HEK293 (cell line): ENCODE measurements at regions of chr6 and their contacts with region 1.

Region 1: DNA sequence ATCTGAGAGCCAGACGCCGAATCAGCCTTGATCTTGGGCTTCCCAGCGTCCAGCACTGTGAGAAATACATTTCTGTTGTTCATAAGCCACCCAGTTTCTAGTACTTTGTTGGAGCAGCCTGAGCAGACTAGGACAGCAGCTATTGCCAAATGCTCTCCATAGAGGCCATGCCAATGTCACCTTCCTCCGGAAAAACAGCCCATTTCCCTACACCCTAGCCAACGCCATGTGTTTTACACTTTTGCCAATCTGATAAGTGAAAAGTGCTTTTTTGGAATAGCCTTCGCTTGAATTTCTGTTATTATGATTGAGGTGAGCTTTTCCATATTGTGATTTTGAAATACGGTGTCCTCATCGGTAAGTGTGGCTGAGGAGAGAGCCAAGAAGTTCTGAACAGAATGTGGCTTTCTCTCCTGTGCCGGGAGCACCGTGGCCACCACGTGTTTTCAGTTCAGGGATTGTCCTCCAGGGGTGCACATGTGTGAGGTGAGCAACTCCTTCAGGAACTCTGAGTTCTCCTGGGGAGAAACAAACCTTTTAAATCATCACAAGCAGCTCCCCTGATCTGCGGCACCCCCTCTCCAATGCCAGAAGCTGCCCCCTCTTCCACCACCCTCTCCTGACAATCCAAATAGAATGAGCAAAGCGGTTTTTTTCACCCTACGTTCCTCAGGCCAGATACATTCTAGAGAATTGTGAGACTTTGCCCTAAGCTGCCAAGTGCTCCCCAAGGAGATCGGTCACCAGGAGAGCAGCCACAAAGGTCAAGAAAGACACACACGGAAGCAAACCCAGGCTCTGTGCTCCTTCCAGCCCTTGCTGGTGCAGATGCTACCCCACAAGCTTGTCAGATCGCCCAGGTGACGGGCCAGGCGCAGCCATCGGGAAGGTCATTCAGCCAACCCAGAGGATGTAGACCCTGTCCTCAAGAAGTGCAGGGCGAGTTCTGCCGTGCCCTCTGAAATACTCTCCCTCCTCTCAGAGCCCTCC is 36.0 kb downstream of the TAF8 start:
- H3K4me3 ChIP-seq: no peak overlapping the region
- H3K27ac ChIP-seq: no peak overlapping the region
- H3K4me1 ChIP-seq: no peaks in the 10 kb centered on the region
- CTCF ChIP-seq: 0 out of 2 replicates have a peak, but pooled peaks have one; percentile 12

Region 2: GRCh38 chr6:41878961-41879405 is 207.4 kb before region 1 on chr6:
- CTCF ChIA-PET with region 1: interaction called, 10 read pairs
- POLR2A ChIA-PET with region 1: no interaction called
- H3K4me3 ChIP-seq: no peak overlapping the region
- H3K27ac ChIP-seq: no peak overlapping the region
- H3K4me1 ChIP-seq: no peaks in the 10 kb centered on the region
- CTCF ChIP-seq: no peak

Region 3: DNA sequence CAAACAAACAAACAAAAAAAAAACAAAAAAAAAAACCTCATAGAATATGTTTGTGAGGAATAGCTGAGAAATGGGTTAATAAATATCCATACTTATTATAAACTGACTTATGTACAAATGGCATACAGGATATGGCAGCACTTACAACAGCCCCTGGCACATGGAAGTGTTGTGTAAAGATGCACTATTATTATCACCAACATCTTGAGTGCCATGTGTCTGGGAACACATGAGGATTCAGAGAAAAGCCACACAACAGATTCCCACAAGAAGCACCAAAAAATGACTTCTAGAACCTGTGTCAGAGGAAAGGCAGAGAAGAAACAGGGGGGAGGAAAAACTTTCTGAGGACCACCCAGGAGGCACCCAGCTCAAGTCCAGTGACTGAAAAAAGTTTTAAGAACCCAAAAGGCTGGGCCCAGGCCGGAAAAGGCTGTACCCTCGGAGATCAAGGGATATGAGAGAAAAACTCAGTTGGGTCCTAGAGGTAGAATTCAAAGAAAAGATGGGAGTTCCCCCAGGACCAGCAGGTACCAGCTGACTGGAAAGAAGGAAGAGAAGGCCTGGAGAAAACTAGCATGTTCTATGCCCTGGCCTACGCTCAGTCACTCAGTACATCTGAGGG is 45.4 kb before region 1 on chr6:
- CTCF ChIA-PET with region 1: no interaction called
- POLR2A ChIA-PET with region 1: no interaction called
- H3K4me3 ChIP-seq: no peak overlapping the region
- H3K27ac ChIP-seq: no peak overlapping the region
- H3K4me1 ChIP-seq: peaks cover 8% of the 10 kb centered on the region
- CTCF ChIP-seq: no peak

Region 4: GRCh38 chr6:42075159-42075838 is 11.0 kb before region 1 on chr6:
- CTCF ChIA-PET with region 1: interaction called, 27 read pairs
- POLR2A ChIA-PET with region 1: no interaction called
- H3K4me3 ChIP-seq: no peak overlapping the region
- H3K27ac ChIP-seq: no peak overlapping the region
- H3K4me1 ChIP-seq: no peaks in the 10 kb centered on the region
- CTCF ChIP-seq: peak; percentile 62

Region 5: GRCh38 chr6:42166444-42167141 is 80.3 kb after region 1 on chr6:
- CTCF ChIA-PET with region 1: interaction called, 24 read pairs
- POLR2A ChIA-PET with region 1: no interaction called
- H3K4me3 ChIP-seq: no peak overlapping the region
- H3K27ac ChIP-seq: no peak overlapping the region
- H3K4me1 ChIP-seq: no peaks in the 10 kb centered on the region
- CTCF ChIP-seq: peak; percentile 86